GM13976 (cell line): ENCODE measurements at regions of chr9 and their contacts with region 1.

Region 1: DNA sequence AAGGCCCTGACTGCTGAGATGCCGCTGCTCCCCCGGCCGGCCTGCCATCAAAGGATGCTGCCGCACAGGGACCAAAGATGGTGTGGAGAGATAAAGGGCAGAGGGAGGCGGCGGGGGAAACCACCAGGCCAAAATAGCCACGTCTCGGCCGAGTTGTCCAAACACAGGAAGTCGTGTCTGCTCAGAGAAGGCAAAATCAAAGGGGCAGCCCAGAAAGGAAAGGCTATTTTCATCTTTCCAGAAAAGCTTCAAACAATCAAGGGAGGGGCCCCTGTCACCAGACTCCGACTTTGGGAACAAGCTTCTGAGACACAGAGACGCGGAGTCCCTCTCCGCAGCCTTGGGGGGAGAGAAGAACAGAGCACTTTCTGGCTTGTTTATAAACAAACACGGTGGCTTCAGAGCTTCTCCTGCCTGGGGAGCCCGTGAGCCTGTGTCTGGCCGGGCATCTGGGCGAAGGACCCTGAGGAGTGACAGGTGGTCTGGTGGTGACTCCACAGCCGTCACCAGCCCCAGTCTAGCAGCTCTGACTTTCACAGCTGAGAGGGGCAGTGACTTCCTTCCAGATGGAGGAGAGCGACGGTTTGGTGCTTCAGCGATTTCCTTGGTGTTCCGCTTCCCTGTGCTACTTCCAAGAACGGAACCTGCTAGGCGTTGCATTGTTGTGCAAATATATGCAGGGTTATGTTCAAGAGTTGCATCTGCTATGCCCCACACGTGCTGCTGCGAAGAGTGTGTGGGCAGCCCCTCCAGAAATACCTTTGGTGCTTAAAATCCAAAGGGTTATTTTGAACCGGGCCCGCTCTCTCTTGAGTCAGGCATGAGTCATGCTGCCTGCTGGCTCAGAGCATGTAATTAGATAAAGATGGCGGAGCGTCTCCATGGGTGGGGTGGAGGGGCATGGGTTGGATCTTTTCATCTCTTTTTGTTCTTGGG is 24.0 kb downstream of the ADAMTSL2 start:
- DNase-seq: peak; percentile 89
- CTCF ChIP-seq: no peak

Region 2: DNA sequence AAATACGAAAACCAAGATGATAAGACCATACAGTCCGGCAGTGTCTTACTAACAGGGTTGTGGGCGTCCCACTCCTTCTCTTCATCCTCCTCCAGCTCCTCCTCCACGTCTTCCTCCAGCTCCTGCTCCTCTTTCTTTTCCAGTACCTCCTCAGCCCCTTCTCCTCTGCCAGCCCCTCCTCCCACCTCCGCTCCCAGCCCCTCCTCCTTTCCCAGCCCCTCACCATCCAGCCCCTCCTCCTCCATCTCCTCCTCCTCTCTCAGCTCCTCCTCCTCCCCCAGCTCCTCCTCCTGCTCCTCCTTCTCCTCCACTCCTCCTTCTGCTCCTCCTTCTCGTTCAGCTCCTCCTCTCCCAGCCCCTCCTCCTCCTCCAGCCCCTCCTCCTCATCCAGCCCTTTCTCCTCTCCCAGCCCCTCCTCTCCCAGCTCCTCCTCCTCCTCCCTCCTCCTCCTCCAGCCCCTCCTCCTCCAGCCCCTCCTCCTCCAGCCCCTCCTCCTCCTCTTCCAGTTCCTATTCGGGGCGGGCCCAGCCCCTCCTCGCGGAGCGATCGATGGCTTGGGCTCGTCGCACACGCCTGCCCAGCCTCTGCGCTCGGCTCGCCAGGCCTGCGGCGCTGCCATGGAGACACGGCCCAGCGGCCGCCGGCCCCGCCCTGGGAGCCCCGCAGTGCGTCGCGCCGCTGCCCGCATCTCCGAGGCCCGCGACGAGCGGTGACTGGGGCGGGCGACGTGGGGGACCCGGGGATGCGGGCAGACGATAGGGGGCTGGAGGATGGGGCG is 466.6 kb after region 1 on chr9 and contains the start of gene BRD3OS:
- in situ Hi-C with region 1: loop called (anchors 25 kb)
- DNase-seq: peak; percentile 96
- CTCF ChIP-seq: no peak